ENCODE measurements at regions of chr19 and their contacts with region 1.

Region 1: DNA sequence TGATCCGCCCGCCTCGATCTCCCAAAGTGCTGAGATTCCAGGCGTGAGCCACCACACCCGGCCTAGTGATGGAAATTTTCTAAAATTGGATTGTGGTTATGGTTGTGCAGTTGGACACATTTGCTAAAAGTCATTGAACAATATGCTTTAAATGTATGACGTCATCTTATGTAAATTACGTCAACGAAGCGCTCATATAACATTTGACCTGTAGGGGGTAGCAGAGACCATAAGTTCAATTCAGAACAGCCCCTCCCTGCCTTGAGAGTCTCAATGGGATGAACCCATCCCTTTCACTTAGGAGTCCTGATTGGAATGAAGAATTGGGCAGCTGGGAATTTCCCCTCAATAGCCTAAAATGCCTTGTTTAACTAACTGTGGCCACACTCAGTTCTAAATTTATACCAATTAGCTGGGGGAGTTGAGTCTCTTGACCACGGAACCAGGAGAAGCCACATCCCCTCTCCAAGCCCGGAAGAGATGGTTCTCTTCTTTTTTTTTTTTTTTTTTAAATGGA is 15.3 kb upstream of the TLE6 start:
- DNase-seq: peak in 1 of 2 experiments; percentile 69
- H3K4me3 ChIP-seq: no peak overlapping the region
- H3K27ac ChIP-seq: no peak overlapping the region
- H3K4me1 ChIP-seq: no peaks in the 10 kb centered on the region
- H3K27me3 ChIP-seq: no peaks in the 10 kb centered on the region; a peak in 1 of 7 replicates
- CTCF ChIP-seq: peak in 2 of 3 experiments; percentile 82 to 83; a peak in 3 of 4 replicates
- EP300 ChIP-seq: no peak
- POLR2A ChIP-seq: no peak
- RAD21 ChIP-seq: peak; percentile 97 to 98

Region 2: DNA sequence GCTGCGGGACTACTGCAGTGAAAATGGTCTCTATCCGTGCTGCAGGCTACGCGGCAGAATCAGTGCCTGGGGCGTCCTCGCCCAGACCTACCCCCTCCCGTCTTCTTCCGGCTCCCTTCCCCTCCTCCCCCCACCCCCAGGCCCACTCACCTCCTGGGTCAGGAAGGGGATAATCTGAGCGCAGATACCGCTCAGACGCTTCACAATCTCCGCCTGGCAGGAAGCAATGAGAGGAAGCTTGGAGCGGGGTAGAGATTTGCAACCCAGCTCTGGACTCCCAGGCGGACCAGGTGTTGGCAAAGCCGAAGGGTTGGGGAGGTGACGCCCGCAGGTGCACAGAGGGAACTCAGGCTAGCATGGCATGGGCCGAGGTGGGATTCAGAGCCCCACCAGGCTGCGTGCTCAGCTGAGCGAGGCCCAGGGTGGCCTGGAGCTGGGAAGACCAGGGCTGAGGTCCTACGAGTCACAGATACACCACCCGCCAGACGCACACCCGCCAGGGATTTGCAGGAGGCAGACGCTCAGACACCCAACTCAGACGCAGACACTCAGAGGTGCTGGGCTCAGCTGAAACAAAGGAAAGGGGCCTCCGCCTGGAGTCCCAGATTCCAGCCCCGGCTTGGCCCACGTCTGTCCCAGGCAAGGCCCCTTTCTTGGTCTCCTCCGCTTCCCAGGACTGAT is 62.9 kb after region 1 on chr19:
- CTCF ChIA-PET with region 1: interaction called, 10 read pairs
- POLR2A ChIA-PET with region 1: no interaction called
- DNase-seq: peak in 1 of 2 experiments; percentile 67
- H3K4me3 ChIP-seq: peak overlapping the region; percentile 4 to 46 (median 8); a peak in 5 of 8 replicates
- H3K27ac ChIP-seq: no peak overlapping the region
- H3K4me1 ChIP-seq: peaks cover 0 to 18% (median 13%) of the 10 kb centered on the region in 4 experiments; a peak in 6 of 7 replicates
- H3K27me3 ChIP-seq: peaks cover 9 to 43% (median 35%) of the 10 kb centered on the region in 4 experiments
- CTCF ChIP-seq: no peak
- EP300 ChIP-seq: no peak
- POLR2A ChIP-seq: no peak
- RAD21 ChIP-seq: no peak

Region 3: GRCh38 chr19:3116255-3116602 is 154.1 kb after region 1 on chr19:
- CTCF ChIA-PET with region 1: interaction called, 260 read pairs
- POLR2A ChIA-PET with region 1: no interaction called
- DNase-seq: peak in 1 of 2 experiments; percentile 31
- H3K4me3 ChIP-seq: no peak overlapping the region
- H3K27ac ChIP-seq: no peak overlapping the region
- H3K4me1 ChIP-seq: peaks cover 0 to 14% (median 6%) of the 10 kb centered on the region in 4 experiments; a peak in 3 of 7 replicates
- H3K27me3 ChIP-seq: peaks cover 0 to 2% (median 0%) of the 10 kb centered on the region in 4 experiments; a peak in 1 of 7 replicates
- CTCF ChIP-seq: no peak
- EP300 ChIP-seq: no peak
- POLR2A ChIP-seq: no peak
- RAD21 ChIP-seq: no peak

Measured in H1 (cell line).